ENCODE measurements at regions of chrX and their contacts with region 1.

Region 1: GRCh38 chrX:15686818-15687685 is 22.4 kb upstream of the CLTRN start:
- DNase-seq: peak; percentile 37 to 82
- ATAC-seq: peak; percentile 88 to 97 (median 96)
- H3K4me3 ChIP-seq: no peak overlapping the region
- H3K4me3 Mint-ChIP-seq: no peak overlapping the region
- H3K27ac ChIP-seq: no peak overlapping the region
- H3K27ac Mint-ChIP-seq: no peak overlapping the region
- H3K4me1 ChIP-seq: peaks cover 6% of the 10 kb centered on the region
- H3K4me1 Mint-ChIP-seq: peaks cover 0 to 6% of the 10 kb centered on the region in 2 donors
- H3K27me3 ChIP-seq: no peaks in the 10 kb centered on the region
- H3K27me3 Mint-ChIP-seq: no peaks in the 10 kb centered on the region
- CTCF ChIP-seq: peak; percentile 60

Region 2: DNA sequence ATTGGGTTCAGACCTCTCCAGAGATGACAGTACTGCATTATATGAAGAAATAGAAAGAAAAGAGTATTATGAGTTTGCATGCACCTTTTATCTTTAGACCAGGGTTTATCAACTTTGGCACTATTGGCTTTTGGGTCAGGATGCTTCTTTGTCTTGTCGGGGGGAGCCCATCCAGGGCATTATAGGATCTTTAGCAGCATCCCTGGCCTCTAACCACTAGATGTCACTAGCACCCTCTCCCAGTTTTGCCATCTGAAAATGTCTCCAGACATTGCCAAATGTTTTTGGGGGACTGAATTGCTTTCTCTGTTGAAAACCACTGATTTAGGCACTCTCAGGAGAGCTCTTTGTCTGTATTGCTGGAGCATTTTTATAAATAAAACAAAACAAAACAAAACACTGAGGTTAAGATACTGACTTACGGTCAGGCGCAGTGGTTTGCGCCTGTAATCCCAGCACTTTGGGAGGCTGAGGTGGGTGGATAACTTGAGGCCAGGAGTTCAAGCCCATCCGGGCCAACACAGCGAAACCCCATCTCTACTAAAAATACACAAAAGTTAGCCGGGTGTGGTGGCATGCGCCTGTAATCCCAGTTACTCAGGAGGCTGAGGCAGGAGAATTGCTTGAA is 74.6 kb after region 1 on chrX:
- intact Hi-C with region 1: loop called (anchors 5 kb)
- DNase-seq: peak in 1 of 2 donors; percentile 67
- ATAC-seq: peak; percentile 46 to 69 (median 57)
- H3K4me3 ChIP-seq: no peak overlapping the region
- H3K4me3 Mint-ChIP-seq: no peak overlapping the region
- H3K27ac ChIP-seq: no peak overlapping the region
- H3K27ac Mint-ChIP-seq: peak overlapping the region; percentile 71 to 85
- H3K4me1 ChIP-seq: peaks cover 26% of the 10 kb centered on the region
- H3K4me1 Mint-ChIP-seq: peaks cover 37 to 51% of the 10 kb centered on the region in 2 donors
- H3K27me3 ChIP-seq: no peaks in the 10 kb centered on the region
- H3K27me3 Mint-ChIP-seq: no peaks in the 10 kb centered on the region
- CTCF ChIP-seq: peak; percentile 41

Region 3: DNA sequence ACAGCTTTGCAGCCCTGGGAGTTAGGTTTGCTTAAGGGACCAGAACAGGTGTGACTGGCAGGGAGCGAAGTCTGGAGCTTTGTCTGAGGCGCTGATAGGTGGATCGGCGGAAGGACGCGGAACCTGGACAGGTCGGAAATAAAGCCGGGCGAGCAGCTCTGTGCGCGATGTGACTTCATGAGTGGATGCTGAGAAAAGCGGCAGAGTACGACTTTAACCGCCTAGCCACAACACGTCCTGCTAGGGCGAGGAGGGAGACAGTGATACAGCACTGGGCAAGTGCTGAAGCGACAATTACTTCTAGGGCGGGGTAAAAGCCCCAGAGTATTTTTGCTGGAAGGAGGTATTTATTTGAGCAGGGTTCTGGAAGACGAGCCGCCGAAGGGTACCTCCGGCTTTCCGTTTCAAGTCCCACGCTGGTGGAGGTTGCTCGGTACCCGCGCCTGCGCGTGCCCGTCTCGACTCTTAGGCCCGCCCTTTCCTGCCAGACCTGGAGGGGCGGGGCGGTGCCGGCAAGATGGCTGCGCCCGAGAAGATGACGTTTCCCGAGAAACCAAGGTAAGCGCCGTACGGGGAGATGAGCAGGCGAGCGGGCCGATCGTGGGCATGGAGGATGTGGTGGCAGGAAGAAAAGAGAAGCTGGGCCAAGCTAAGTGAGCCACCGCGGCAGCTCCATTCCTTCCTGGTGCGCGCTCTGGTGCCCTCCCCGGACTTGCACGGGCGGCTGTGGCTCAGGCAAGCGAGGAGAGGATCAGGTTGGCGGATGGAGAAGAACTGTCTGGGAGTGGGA is 103.1 kb after region 1 on chrX and contains the start of gene ZRSR2:
- intact Hi-C with region 1: loop called (anchors 2 kb)
- DNase-seq: peak; percentile 78 to 92
- ATAC-seq: peak; percentile 92 to 97 (median 92)
- H3K4me3 ChIP-seq: peak within 1 kb of the TSS; percentile 59
- H3K4me3 Mint-ChIP-seq: no peak within 1 kb of the TSS
- H3K27ac ChIP-seq: peak within 1 kb of the TSS; percentile 84
- H3K27ac Mint-ChIP-seq: no peak within 1 kb of the TSS
- H3K4me1 ChIP-seq: peaks cover 21% of the 10 kb centered on the region
- H3K4me1 Mint-ChIP-seq: peaks cover 16 to 17% of the 10 kb centered on the region in 2 donors
- H3K27me3 ChIP-seq: no peaks in the 10 kb centered on the region
- H3K27me3 Mint-ChIP-seq: no peaks in the 10 kb centered on the region
- CTCF ChIP-seq: no peak
- total RNA-seq, gene ZRSR2: 21.7 to 44.2 (median 28.2) TPM

Measured in natural killer cell (primary cell).